ENCODE measurements at regions of chr3 and their contacts with region 1.

Region 1: DNA sequence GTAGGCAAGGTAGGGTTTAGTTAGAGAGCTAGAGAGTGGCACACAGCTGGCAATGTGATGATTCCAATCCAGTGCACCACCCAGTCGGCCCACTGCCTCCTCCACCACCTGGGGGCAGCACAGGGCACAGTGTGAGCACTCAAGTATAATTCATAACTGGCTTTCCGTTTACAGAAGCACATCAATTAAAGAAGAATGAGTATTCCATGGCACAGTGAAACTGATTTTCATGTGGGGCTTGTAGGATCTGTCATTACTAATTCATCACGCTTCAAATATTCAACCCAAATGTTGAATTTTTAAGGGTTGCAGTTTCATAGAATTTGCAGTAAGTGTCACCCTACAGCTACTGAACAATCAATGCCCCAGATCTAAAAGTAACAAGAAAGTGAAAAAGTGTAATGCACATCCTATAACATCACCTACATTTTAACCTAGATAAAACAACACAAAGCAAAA is 149.9 kb downstream of the IGSF11 start:
- DNase-seq: peak; percentile 71
- H3K4me3 Mint-ChIP-seq: no peak overlapping the region
- H3K27ac Mint-ChIP-seq: no peak overlapping the region
- H3K4me1 Mint-ChIP-seq: no peaks in the 10 kb centered on the region
- H3K27me3 Mint-ChIP-seq: peaks cover 61% of the 10 kb centered on the region
- CTCF ChIP-seq: peak; percentile 92

Region 2: DNA sequence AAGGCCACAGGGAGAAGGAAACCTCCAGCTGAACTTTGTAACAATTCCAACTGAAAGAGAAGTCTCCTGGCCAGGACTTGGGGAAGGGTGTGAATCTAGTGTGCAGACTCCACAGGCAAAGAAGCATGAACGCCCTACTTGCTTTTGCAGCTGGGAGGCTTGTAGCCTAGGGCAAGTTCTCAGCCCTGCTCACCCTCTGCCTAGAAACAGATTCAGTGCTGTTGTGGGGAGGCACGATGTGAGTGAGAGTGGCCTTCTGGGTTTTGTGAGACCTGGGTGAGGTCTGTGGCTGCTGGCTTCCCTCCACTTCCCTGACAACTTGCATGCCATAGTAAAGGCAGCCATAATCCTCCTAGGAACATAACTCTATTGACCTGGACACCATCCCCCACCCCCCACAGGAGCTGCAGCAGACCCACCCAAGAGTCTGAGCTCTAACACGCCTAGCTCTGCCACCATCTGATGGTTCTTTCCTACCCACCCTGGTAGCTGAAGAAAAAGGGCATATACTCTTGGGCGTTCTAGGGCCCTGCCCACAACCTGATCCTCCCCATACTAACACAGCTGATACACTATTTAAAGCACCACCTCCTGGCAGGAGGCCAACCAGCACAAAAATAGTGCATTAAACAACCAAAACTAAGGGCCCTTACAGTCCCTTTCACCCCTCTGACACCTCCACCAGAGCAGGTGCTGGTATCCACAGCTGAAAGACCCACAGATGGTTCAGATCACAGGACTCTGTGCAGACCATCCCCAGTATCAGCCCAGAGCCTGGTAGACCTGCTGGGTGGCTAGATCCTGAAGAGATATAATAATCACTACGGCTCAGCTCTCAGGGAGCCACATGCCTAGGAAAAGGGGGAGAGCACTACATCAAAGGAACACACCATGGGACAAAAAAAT is 276.6 kb before region 1 on chr3:
- CTCF ChIA-PET with region 1: no interaction called
- POLR2A ChIA-PET with region 1: no interaction called
- intact Hi-C with region 1: no loop called
- DNase-seq: no peak
- H3K4me3 Mint-ChIP-seq: no peak overlapping the region
- H3K27ac Mint-ChIP-seq: no peak overlapping the region
- H3K4me1 Mint-ChIP-seq: no peaks in the 10 kb centered on the region
- H3K27me3 Mint-ChIP-seq: no peaks in the 10 kb centered on the region
- CTCF ChIP-seq: no peak

Region 3: GRCh38 chr3:118754406-118755252 is 130.1 kb before region 1 on chr3:
- CTCF ChIA-PET with region 1: no interaction called
- POLR2A ChIA-PET with region 1: no interaction called
- intact Hi-C with region 1: no loop called
- DNase-seq: no peak
- H3K4me3 Mint-ChIP-seq: no peak overlapping the region
- H3K27ac Mint-ChIP-seq: no peak overlapping the region
- H3K4me1 Mint-ChIP-seq: no peaks in the 10 kb centered on the region
- H3K27me3 Mint-ChIP-seq: no peaks in the 10 kb centered on the region
- CTCF ChIP-seq: no peak

Region 4: GRCh38 chr3:118772547-118773011 is 112.2 kb before region 1 on chr3:
- CTCF ChIA-PET with region 1: no interaction called
- POLR2A ChIA-PET with region 1: no interaction called
- intact Hi-C with region 1: no loop called
- DNase-seq: peak; percentile 49
- H3K4me3 Mint-ChIP-seq: no peak overlapping the region
- H3K27ac Mint-ChIP-seq: peak overlapping the region; percentile 52
- H3K4me1 Mint-ChIP-seq: peaks cover 9% of the 10 kb centered on the region
- H3K27me3 Mint-ChIP-seq: no peaks in the 10 kb centered on the region
- CTCF ChIP-seq: no peak

Region 5: DNA sequence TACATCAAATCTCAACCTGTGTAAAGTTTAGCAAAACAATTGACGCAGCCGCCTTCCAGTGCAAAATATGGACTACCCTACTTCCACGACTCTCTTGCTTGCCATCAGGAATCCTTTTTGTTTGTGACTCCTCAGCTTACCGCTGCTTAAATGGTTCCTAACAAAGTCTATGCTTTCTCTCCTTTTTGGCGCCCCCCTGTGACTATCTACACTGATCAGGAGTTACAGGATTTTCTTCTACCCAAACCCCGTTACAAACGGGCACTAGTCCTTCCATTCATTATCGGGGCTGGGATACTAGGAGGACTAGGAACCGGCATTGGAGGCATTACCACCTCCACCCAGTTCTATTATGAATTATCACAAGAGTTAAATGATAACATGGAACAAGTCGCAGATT is 34.1 kb before region 1 on chr3:
- CTCF ChIA-PET with region 1: interaction called, 16 read pairs
- POLR2A ChIA-PET with region 1: no interaction called
- intact Hi-C with region 1: no loop called
- DNase-seq: no peak
- H3K4me3 Mint-ChIP-seq: no peak overlapping the region
- H3K27ac Mint-ChIP-seq: no peak overlapping the region
- H3K4me1 Mint-ChIP-seq: no peaks in the 10 kb centered on the region
- H3K27me3 Mint-ChIP-seq: no peaks in the 10 kb centered on the region
- CTCF ChIP-seq: no peak

Region 6: GRCh38 chr3:118909763-118910162 is 25.0 kb after region 1 on chr3:
- CTCF ChIA-PET with region 1: interaction called, 52 read pairs
- POLR2A ChIA-PET with region 1: interaction called, 4 read pairs
- intact Hi-C with region 1: no loop called
- DNase-seq: no peak
- H3K4me3 Mint-ChIP-seq: no peak overlapping the region
- H3K27ac Mint-ChIP-seq: no peak overlapping the region
- H3K4me1 Mint-ChIP-seq: no peaks in the 10 kb centered on the region
- H3K27me3 Mint-ChIP-seq: peaks cover 34% of the 10 kb centered on the region
- CTCF ChIP-seq: no peak

Region 7: GRCh38 chr3:119025171-119025795 is 140.5 kb after region 1 on chr3:
- CTCF ChIA-PET with region 1: interaction called, 23 read pairs
- POLR2A ChIA-PET with region 1: no interaction called
- intact Hi-C with region 1: no loop called
- DNase-seq: no peak
- H3K4me3 Mint-ChIP-seq: no peak overlapping the region
- H3K27ac Mint-ChIP-seq: no peak overlapping the region
- H3K4me1 Mint-ChIP-seq: no peaks in the 10 kb centered on the region
- H3K27me3 Mint-ChIP-seq: peaks cover 77% of the 10 kb centered on the region
- CTCF ChIP-seq: no peak

Region 8: GRCh38 chr3:119069725-119070124 is 184.9 kb after region 1 on chr3:
- CTCF ChIA-PET with region 1: interaction called, 16 read pairs
- POLR2A ChIA-PET with region 1: no interaction called
- intact Hi-C with region 1: no loop called
- DNase-seq: no peak
- H3K4me3 Mint-ChIP-seq: no peak overlapping the region
- H3K27ac Mint-ChIP-seq: no peak overlapping the region
- H3K4me1 Mint-ChIP-seq: no peaks in the 10 kb centered on the region
- H3K27me3 Mint-ChIP-seq: peaks cover 21% of the 10 kb centered on the region
- CTCF ChIP-seq: no peak

Region 9: GRCh38 chr3:119104031-119104430 is 219.3 kb after region 1 on chr3:
- CTCF ChIA-PET with region 1: interaction called, 564 read pairs
- POLR2A ChIA-PET with region 1: interaction called, 3 read pairs
- intact Hi-C with region 1: no loop called
- DNase-seq: no peak
- H3K4me3 Mint-ChIP-seq: no peak overlapping the region
- H3K27ac Mint-ChIP-seq: no peak overlapping the region
- H3K4me1 Mint-ChIP-seq: peaks cover 10% of the 10 kb centered on the region
- H3K27me3 Mint-ChIP-seq: no peaks in the 10 kb centered on the region
- CTCF ChIP-seq: no peak

Region 10: GRCh38 chr3:119613201-119613600 is 728.4 kb after region 1 on chr3:
- CTCF ChIA-PET with region 1: no interaction called
- POLR2A ChIA-PET with region 1: no interaction called
- intact Hi-C with region 1: no loop called
- DNase-seq: no peak
- H3K4me3 Mint-ChIP-seq: no peak overlapping the region
- H3K27ac Mint-ChIP-seq: no peak overlapping the region
- H3K4me1 Mint-ChIP-seq: no peaks in the 10 kb centered on the region
- H3K27me3 Mint-ChIP-seq: peaks cover 10% of the 10 kb centered on the region
- CTCF ChIP-seq: no peak

Region 11: DNA sequence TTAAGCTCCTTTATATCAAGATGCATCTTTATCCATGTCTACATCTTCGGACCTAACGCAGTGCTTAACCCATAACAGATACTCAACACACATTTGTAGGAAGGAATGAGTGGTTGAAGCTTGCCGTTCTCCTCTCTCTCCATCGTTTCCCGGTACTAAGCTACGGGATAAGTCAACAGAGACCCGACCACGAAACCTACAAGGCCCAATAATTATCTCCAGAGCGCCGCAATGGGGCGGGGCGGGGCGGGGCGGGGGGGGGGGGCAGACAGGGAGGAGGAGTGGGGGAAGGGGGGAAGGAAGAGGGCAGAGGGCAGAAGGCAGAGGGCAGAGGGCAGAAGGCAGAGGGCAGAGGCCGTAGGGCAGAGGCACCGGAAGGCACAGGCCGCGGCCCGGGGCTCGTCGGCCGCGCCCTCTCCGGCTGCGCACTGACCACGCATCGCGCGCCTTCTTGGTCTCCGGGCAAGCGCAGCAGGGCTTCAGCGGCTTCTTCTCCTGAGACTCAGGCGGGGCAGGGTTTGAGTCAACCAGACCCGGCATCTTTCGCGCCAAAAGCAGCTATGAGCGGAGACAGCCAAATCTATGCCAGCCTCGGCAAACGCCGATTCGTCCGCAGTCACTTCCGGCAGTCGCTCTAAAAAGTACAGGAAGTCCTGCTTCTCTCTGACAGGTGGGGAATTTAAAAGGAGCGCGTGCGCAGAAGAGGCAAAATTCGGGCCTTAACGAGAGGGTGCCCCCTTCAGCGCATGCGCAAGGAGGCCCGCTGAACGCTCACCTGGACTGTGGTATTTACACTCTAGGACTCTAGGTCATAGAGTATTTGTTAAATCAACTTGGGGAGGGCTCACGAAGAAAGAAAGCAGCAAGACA is 792.2 kb after region 1 on chr3 and contains the start of gene COX17:
- CTCF ChIA-PET with region 1: interaction called, 35 read pairs
- POLR2A ChIA-PET with region 1: no interaction called
- intact Hi-C with region 1: loop called (anchors 2 kb)
- DNase-seq: peak; percentile 98
- H3K4me3 Mint-ChIP-seq: peak within 1 kb of the TSS; percentile 79
- H3K27ac Mint-ChIP-seq: peak within 1 kb of the TSS; percentile 91
- H3K4me1 Mint-ChIP-seq: peaks cover 8% of the 10 kb centered on the region
- H3K27me3 Mint-ChIP-seq: no peaks in the 10 kb centered on the region
- CTCF ChIP-seq: no peak
- total RNA-seq, gene COX17: 47.9 and 55.4 TPM in 2 replicates

Measured in MCF 10A (cell line).